HepG2 (cell line): ENCODE measurements at regions of chr19 and their contacts with region 1.

Region 1: GRCh38 chr19:14136509-14137281 is at the start of gene ASF1B:
- DNase-seq: peak; percentile 99
- ATAC-seq: peak; percentile 91
- H3K4me3 ChIP-seq: peak within 1 kb of the TSS; percentile 72 to 90 (median 82)
- H3K27ac ChIP-seq: peak within 1 kb of the TSS; percentile 94
- H3K4me1 ChIP-seq: peaks cover 43% of the 10 kb centered on the region
- H3K27me3 ChIP-seq: no peaks in the 10 kb centered on the region
- CTCF ChIP-seq: peak; percentile 93
- EP300 ChIP-seq: 0 out of 4 replicates have a peak, but pooled peaks of 1 of the 2 experiments have one; percentile 20
- POLR2A ChIP-seq: peak; percentile 93 to 98
- RAD21 ChIP-seq: peak; percentile 89
- total RNA-seq, gene ASF1B: 21.9 and 24.8 TPM in 2 replicates

Region 2: GRCh38 chr19:13942023-13942684 is 194.5 kb before region 1 on chr19:
- CTCF ChIA-PET with region 1: no interaction called
- POLR2A ChIA-PET with region 1: no interaction called
- in situ Hi-C with region 1: no loop called
- intact Hi-C with region 1: no loop called
- DNase-seq: no peak
- ATAC-seq: no peak; the same call in 2 of the 3 replicates
- H3K4me3 ChIP-seq: no peak overlapping the region
- H3K27ac ChIP-seq: no peak overlapping the region
- H3K4me1 ChIP-seq: 0 out of 2 replicates have a peak, but pooled peaks cover 4% of the 10 kb centered on the region
- H3K27me3 ChIP-seq: peaks cover 4 to 10% of the 10 kb centered on the region in 2 experiments; a peak in 3 of 5 replicates
- CTCF ChIP-seq: no peak
- EP300 ChIP-seq: no peak
- POLR2A ChIP-seq: no peak
- RAD21 ChIP-seq: no peak

Region 3: GRCh38 chr19:14081325-14082093 is 55.2 kb before region 1 on chr19:
- CTCF ChIA-PET with region 1: no interaction called
- POLR2A ChIA-PET with region 1: interaction called, 9 read pairs
- in situ Hi-C with region 1: no loop called
- intact Hi-C with region 1: loop called (anchors 2 kb)
- DNase-seq: peak; percentile 99
- ATAC-seq: peak; percentile 80
- H3K4me3 ChIP-seq: peak overlapping the region; percentile 79 to 95 (median 87)
- H3K27ac ChIP-seq: peak overlapping the region; percentile 91
- H3K4me1 ChIP-seq: peaks cover 42% of the 10 kb centered on the region
- H3K27me3 ChIP-seq: no peaks in the 10 kb centered on the region; a peak in 1 of 5 replicates
- CTCF ChIP-seq: no peak
- EP300 ChIP-seq: no peak
- POLR2A ChIP-seq: peak; percentile 82 to 87
- RAD21 ChIP-seq: no peak; the same call in 1 of the 2 replicates

Region 4: DNA sequence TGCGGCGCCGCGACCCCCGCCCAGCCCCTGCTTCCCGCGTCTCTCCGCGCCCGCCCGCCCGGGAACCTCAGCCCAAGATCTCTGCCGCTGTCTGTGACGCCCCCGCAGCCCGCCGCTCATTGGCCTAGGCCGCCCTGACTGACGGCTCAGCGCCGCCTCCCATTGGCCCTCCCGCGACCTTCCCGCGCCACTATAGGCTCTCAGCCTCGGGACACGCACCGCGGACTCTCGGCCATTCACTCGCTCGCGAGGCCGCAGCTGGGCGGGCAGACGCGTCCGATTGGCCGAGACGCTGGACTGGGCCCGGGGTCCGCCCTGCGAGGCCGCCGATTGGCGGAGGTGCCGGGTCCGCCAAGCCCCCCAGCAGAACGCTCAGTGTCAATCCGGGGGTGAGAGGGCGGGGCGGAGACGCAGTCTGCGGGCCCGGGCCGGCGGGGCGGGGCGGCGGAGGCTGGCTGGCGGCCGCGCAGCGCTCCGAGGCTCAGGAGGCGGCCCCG is 19.0 kb before region 1 on chr19 and contains the start of gene PRKACA:
- CTCF ChIA-PET with region 1: interaction called, 6 read pairs
- POLR2A ChIA-PET with region 1: interaction called, 21 read pairs
- in situ Hi-C with region 1: no loop called
- intact Hi-C with region 1: no loop called
- DNase-seq: peak; percentile 94
- ATAC-seq: peak; percentile 91
- H3K4me3 ChIP-seq: peak within 1 kb of the TSS; percentile 80 to 89 (median 86)
- H3K27ac ChIP-seq: peak within 1 kb of the TSS; percentile 96
- H3K4me1 ChIP-seq: peaks cover 55% of the 10 kb centered on the region
- H3K27me3 ChIP-seq: no peaks in the 10 kb centered on the region; a peak in 1 of 5 replicates
- CTCF ChIP-seq: no peak
- EP300 ChIP-seq: no peak
- POLR2A ChIP-seq: 0 out of 4 replicates have a peak, but pooled peaks of 1 of the 2 experiments have one; percentile 15
- RAD21 ChIP-seq: no peak
- total RNA-seq, gene PRKACA: 11.0 and 14.0 TPM in 2 replicates

Region 5: GRCh38 chr19:14147797-14148605 is 11.3 kb after region 1 on chr19:
- CTCF ChIA-PET with region 1: no interaction called
- POLR2A ChIA-PET with region 1: interaction called, 11 read pairs
- in situ Hi-C with region 1: no loop called
- intact Hi-C with region 1: no loop called
- DNase-seq: peak; percentile 39
- ATAC-seq: peak; percentile 93
- H3K4me3 ChIP-seq: peak overlapping the region in 2 of 3 experiments; percentile 35 to 68; a peak in 3 of 6 replicates
- H3K27ac ChIP-seq: no peak overlapping the region
- H3K4me1 ChIP-seq: peaks cover 7% of the 10 kb centered on the region; the same call in 1 of the 2 replicates
- H3K27me3 ChIP-seq: no peaks in the 10 kb centered on the region; a peak in 1 of 5 replicates
- CTCF ChIP-seq: peak; percentile 90
- EP300 ChIP-seq: no peak
- POLR2A ChIP-seq: no peak
- RAD21 ChIP-seq: peak; percentile 73